Ascending aorta (tissue), 2 donors: ENCODE measurements at regions of chr6 and their contacts with region 1.

Region 1: DNA sequence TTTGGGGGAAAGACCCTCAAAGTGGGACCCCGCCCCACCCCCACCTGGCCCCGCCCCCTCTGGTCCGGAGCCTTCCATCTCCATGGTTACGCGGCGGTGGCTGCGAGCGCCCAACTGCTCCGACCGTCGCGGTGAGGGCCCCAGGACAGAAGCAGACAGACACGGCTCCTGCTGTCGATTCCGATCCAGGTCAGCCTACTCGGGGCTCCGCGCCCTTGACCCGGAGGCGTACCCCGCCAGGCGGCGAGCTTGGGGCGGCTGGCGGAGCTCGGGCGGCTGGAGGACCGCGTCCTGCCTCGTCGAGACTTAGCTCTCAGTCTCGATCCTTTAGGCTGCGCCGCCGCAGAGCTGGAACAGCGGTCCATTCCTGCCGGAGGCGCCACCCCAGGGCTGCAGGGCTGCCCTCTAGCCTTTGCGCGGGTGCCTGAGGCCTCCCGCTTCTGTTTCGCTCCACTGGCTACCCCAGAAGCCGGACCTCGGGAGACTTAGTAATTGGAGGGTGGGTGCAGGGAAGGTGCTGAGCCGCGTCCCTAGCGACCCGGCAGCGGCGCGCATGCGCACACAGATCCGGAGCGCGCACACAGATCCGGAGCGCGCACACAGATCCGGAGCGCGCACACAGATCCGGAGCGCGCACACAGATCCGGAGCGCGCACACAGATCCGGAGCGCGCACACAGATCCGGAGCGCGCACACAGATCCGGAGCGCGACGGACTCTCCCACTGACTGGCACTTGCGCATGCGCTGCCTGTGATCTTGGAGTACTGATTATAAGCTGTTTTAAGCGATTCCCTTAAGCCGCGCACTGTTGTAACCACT is at the start of gene CFAP206:
- DNase-seq: peak; percentile 21 to 88
- H3K4me3 ChIP-seq: peak within 1 kb of the TSS; percentile 84 to 93
- H3K27ac ChIP-seq: peak within 1 kb of the TSS; percentile 75 to 83
- H3K4me1 ChIP-seq: no peaks in the 10 kb centered on the region
- H3K27me3 ChIP-seq: no peaks in the 10 kb centered on the region
- CTCF ChIP-seq: peak in 1 of 3 experiments; percentile 5
- total RNA-seq, gene CFAP206: 1.4 TPM

Region 2: GRCh38 chr6:87472525-87473418 is 64.7 kb after region 1 on chr6 and contains the start of gene SLC35A1:
- intact Hi-C with region 1: loop called (anchors 1 kb)
- DNase-seq: peak; percentile 30 to 92
- H3K4me3 ChIP-seq: peak within 1 kb of the TSS; percentile 85 to 96
- H3K27ac ChIP-seq: peak within 1 kb of the TSS; percentile 82 to 93
- H3K4me1 ChIP-seq: peaks cover 0 to 3% of the 10 kb centered on the region in 2 donors
- H3K27me3 ChIP-seq: no peaks in the 10 kb centered on the region
- CTCF ChIP-seq: peak in 1 of 3 experiments; percentile 15
- total RNA-seq, gene SLC35A1: 7.9 TPM